ENCODE measurements at regions of chr11 and their contacts with region 1.

Region 1: DNA sequence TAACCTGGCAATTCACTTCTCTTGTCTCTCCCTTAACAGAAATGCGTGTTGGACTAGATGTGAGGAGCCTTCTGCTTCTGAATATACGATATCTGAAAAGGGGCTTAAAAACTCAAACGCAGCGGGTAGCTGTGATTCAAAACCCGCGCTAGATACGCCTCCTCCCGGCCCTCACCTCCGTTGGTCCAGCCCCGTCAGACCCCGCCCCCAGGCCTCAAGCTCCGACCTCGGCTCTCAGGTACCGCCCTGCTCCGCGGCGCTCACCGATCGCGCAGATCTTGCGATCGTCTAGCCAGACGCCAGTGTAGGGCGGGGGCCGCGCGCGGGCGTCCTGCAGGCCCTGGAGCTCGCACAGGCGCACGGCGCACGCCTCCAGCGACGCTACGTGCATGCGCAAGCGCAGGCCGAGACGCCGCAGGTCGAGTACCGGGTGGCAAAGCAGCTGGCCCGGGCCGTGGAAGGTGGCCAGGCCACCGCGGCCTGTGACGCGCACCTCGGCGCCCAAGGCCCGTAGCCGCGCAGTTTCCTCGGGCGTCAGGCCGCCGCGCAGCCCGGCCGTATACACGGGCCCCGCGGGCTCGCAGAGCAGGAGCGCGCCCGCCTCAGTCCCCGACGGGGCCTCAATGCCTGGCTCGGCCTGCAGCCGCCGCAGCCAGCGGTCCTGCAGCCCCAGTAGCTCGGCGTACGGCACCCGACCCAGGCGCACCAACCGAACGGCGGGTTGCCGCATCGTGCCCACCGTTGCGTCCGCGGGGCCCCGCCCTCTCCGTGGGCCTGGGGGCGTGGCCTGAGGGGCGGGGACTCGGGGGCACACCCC is at the start of gene LIPT2:
- DNase-seq: peak; percentile 99
- H3K4me3 ChIP-seq: peak within 1 kb of the TSS; percentile 83
- H3K27ac ChIP-seq: peak within 1 kb of the TSS; percentile 90
- H3K4me1 ChIP-seq: peaks cover 17% of the 10 kb centered on the region
- CTCF ChIP-seq: no peak
- total RNA-seq, gene LIPT2: 11.8 and 14.3 TPM in 2 replicates

Region 2: DNA sequence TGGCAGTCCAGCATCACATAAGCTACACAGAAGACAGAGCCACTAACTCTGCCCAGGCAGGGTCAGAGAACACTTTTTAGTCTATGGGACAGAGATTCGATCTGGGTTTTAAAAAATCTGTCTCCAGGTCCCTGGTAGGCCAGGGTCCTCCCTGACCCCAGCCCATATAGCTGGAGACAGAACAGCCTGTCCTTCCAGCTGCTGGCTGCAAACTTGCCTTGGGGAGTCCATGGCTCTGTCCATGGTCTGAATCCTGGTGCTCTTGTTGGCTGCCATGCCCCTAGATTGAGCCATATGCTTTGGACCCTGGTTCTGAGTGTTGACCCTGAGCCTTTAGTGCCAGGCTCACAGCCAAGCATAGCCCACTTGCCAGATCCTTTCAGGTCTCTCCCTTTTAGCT is 13.6 kb after region 1 on chr11:
- CTCF ChIA-PET with region 1: no interaction called
- POLR2A ChIA-PET with region 1: interaction called, 11 read pairs
- intact Hi-C with region 1: no loop called
- DNase-seq: no peak
- H3K4me3 ChIP-seq: no peak overlapping the region
- H3K27ac ChIP-seq: no peak overlapping the region
- H3K4me1 ChIP-seq: no peaks in the 10 kb centered on the region
- CTCF ChIP-seq: no peak

Region 3: DNA sequence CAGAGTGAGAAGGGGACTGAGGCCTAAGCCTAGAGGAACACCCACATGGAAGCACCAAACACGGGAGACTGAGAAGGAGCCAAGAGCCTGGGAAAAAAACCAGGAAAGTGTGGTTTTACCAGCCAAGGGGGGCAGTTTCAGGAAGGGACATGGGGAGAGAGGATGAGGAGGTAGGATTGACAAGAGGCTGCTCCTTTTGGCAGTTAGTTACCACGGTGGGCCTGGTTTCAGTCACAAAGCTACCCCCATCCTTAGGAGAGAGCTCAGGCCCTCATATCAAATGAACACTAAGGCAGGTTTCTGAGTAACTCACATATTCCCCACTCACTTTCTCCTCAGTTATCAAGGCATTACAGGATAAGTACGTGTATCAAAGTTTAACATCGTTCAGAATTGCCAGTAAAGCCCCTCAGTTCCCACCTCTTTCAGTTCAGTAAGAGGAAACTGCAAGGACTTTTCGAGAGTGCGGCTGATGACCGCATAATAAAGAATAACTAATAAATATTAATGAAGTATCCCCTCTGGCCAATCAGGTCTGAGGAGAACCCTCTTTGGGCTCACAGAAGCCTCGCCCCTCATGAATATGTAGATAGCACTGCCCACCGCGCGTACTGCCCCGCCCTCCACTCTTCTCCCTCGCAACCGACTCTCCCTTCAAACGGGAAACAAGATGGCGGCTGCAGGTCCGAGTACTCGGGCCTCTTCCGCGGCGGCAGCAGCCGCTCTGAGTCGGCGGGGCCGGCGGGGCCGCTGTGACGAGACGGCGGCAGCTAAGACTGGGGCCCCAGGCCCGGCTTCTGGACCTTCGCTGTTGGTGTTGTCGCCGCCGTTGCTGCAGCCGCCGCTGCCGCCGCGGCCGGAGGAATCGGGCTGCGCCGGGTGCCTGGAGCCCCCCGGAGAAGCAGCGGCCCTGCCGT is 255.3 kb after region 1 on chr11 and contains the start of gene RNF169:
- CTCF ChIA-PET with region 1: no interaction called
- POLR2A ChIA-PET with region 1: no interaction called
- intact Hi-C with region 1: loop called (anchors 1 kb)
- DNase-seq: peak; percentile 98
- H3K4me3 ChIP-seq: peak within 1 kb of the TSS; percentile 75
- H3K27ac ChIP-seq: peak within 1 kb of the TSS; percentile 75
- H3K4me1 ChIP-seq: peaks cover 30% of the 10 kb centered on the region
- CTCF ChIP-seq: no peak
- total RNA-seq, gene RNF169: 16.4 and 16.9 TPM in 2 replicates

Measured in OCI-LY7 (cell line).